Naive thymus-derived CD4-positive, alpha-beta T cell (primary cell): ENCODE measurements at regions of chr2 and their contacts with region 1.

Region 1: DNA sequence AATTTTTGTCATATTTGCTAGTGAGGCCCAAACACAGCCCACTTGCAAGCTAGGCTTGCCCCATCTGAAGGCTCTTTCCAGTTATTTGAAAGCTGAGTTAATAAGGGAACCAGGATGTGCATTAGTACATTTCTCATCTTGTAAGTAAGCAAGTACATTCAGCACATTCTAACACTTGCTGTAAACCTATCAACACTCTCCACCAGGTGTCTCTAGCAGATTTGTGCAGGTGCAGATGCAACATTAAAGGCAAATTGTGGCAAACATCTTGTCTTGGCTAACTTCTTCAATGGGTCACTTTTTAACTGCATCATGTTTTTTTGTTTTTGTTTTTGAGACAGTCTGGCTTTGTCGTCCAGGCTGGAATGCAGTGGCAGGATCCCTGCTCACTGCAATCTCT is 25.3 kb upstream of the MFSD6 start:
- DNase-seq: peak in 7 of 9 donors; percentile 48 to 74 (median 65)
- ATAC-seq: peak; percentile 84
- H3K4me3 ChIP-seq: no peak overlapping the region
- H3K4me3 Mint-ChIP-seq: no peak overlapping the region
- H3K27ac ChIP-seq: no peak overlapping the region
- H3K27ac Mint-ChIP-seq: peak overlapping the region in 2 of 9 donors; percentile 28 to 68
- H3K4me1 ChIP-seq: no peaks in the 10 kb centered on the region
- H3K4me1 Mint-ChIP-seq: peaks cover 0 to 6% (median 0%) of the 10 kb centered on the region in 7 donors
- H3K27me3 ChIP-seq: no peaks in the 10 kb centered on the region
- H3K27me3 Mint-ChIP-seq: peaks cover 0 to 2% (median 0%) of the 10 kb centered on the region in 5 donors

Region 2: GRCh38 chr2:188524519-188525113 is 1858.2 kb before region 1 on chr2:
- CTCF ChIA-PET with region 1: no interaction called
- POLR2A ChIA-PET with region 1: no interaction called
- intact Hi-C with region 1: loop called in 1 of 2 experiments (anchors 10 kb)
- DNase-seq: peak in 6 of 9 donors; percentile 4 to 40 (median 27)
- ATAC-seq: peak; percentile 61
- H3K4me3 ChIP-seq: no peak overlapping the region
- H3K4me3 Mint-ChIP-seq: no peak overlapping the region
- H3K27ac ChIP-seq: no peak overlapping the region
- H3K27ac Mint-ChIP-seq: no peak overlapping the region
- H3K4me1 ChIP-seq: no peaks in the 10 kb centered on the region
- H3K4me1 Mint-ChIP-seq: no peaks in the 10 kb centered on the region
- H3K27me3 ChIP-seq: no peaks in the 10 kb centered on the region
- H3K27me3 Mint-ChIP-seq: peaks cover 0 to 5% (median 2%) of the 10 kb centered on the region in 5 donors

Region 3: GRCh38 chr2:190511104-190511503 is 128.3 kb after region 1 on chr2:
- CTCF ChIA-PET with region 1: interaction called, 4 read pairs
- POLR2A ChIA-PET with region 1: no interaction called
- intact Hi-C with region 1: loop called (anchors 1 kb)
- DNase-seq: no peak
- ATAC-seq: no peak
- H3K4me3 ChIP-seq: no peak overlapping the region
- H3K4me3 Mint-ChIP-seq: no peak overlapping the region
- H3K27ac ChIP-seq: no peak overlapping the region
- H3K27ac Mint-ChIP-seq: peak overlapping the region in 4 of 9 donors; percentile 1 to 64 (median 43)
- H3K4me1 ChIP-seq: peaks cover 8 to 10% of the 10 kb centered on the region in 2 donors
- H3K4me1 Mint-ChIP-seq: peaks cover 7 to 36% (median 26%) of the 10 kb centered on the region in 7 donors
- H3K27me3 ChIP-seq: no peaks in the 10 kb centered on the region
- H3K27me3 Mint-ChIP-seq: no peaks in the 10 kb centered on the region

Region 4: GRCh38 chr2:190551928-190552327 is 169.1 kb after region 1 on chr2:
- CTCF ChIA-PET with region 1: interaction called, 6 read pairs
- POLR2A ChIA-PET with region 1: no interaction called
- intact Hi-C with region 1: loop called in 1 of 2 experiments (anchors 1 kb)
- DNase-seq: peak in 2 of 9 donors; percentile 19 to 37
- ATAC-seq: peak; percentile 93
- H3K4me3 ChIP-seq: no peak overlapping the region
- H3K4me3 Mint-ChIP-seq: peak overlapping the region in 7 of 10 donors; percentile 5 to 73 (median 21)
- H3K27ac ChIP-seq: no peak overlapping the region
- H3K27ac Mint-ChIP-seq: peak overlapping the region in 6 of 9 donors; percentile 38 to 90 (median 61)
- H3K4me1 ChIP-seq: no peaks in the 10 kb centered on the region
- H3K4me1 Mint-ChIP-seq: peaks cover 9 to 11% (median 10%) of the 10 kb centered on the region in 7 donors
- H3K27me3 ChIP-seq: no peaks in the 10 kb centered on the region
- H3K27me3 Mint-ChIP-seq: no peaks in the 10 kb centered on the region

Region 5: GRCh38 chr2:190679813-190680591 is 297.2 kb after region 1 on chr2:
- CTCF ChIA-PET with region 1: interaction called, 28 read pairs
- POLR2A ChIA-PET with region 1: no interaction called
- intact Hi-C with region 1: loop called (anchors 1 kb)
- DNase-seq: peak; percentile 27 to 59 (median 46)
- ATAC-seq: peak; percentile 92
- H3K4me3 ChIP-seq: no peak overlapping the region
- H3K4me3 Mint-ChIP-seq: peak overlapping the region in 2 of 10 donors; percentile 8
- H3K27ac ChIP-seq: no peak overlapping the region
- H3K27ac Mint-ChIP-seq: peak overlapping the region in 7 of 9 donors; percentile 7 to 74 (median 52)
- H3K4me1 ChIP-seq: peaks cover 5 to 10% of the 10 kb centered on the region in 2 donors
- H3K4me1 Mint-ChIP-seq: peaks cover 17 to 49% (median 41%) of the 10 kb centered on the region in 7 donors
- H3K27me3 ChIP-seq: no peaks in the 10 kb centered on the region
- H3K27me3 Mint-ChIP-seq: no peaks in the 10 kb centered on the region

Region 6: DNA sequence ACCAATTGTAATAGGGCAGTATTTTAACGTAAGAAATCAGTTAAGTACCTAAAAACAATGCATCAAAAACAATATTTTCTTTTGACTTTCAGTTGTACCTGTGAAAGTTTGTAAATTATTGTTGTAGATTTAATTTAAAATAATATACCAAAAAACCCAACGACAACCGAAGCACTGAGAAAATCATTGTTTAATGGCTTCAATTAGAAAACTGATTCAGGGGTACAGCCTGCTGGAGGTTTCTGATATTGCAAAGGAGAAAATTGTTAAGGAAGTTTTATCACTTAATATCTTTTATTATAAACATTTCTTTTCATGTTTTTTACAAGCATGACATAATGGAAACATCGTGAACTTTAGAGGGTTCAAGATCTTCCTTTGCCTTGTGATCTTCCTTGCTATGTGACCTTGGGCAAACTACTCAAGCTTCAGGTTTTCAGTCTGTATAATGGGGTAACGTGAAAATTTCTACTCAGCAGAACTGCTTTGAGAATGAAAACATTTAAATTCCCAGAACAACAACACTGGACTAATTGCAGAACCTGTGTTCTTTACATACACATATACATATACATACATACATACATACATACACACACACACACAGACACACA is 421.4 kb after region 1 on chr2:
- CTCF ChIA-PET with region 1: no interaction called
- POLR2A ChIA-PET with region 1: no interaction called
- intact Hi-C with region 1: loop called in 1 of 2 experiments (anchors 1 kb)
- DNase-seq: peak in 5 of 9 donors; percentile 6 to 19 (median 13)
- ATAC-seq: no peak
- H3K4me3 ChIP-seq: no peak overlapping the region
- H3K4me3 Mint-ChIP-seq: no peak overlapping the region
- H3K27ac ChIP-seq: no peak overlapping the region
- H3K27ac Mint-ChIP-seq: no peak overlapping the region
- H3K4me1 ChIP-seq: no peaks in the 10 kb centered on the region
- H3K4me1 Mint-ChIP-seq: peaks cover 0 to 9% (median 0%) of the 10 kb centered on the region in 7 donors
- H3K27me3 ChIP-seq: no peaks in the 10 kb centered on the region
- H3K27me3 Mint-ChIP-seq: no peaks in the 10 kb centered on the region